Endothelial cell of umbilical vein (primary cell): ENCODE measurements at regions of chr11 and their contacts with region 1.

Region 1: DNA sequence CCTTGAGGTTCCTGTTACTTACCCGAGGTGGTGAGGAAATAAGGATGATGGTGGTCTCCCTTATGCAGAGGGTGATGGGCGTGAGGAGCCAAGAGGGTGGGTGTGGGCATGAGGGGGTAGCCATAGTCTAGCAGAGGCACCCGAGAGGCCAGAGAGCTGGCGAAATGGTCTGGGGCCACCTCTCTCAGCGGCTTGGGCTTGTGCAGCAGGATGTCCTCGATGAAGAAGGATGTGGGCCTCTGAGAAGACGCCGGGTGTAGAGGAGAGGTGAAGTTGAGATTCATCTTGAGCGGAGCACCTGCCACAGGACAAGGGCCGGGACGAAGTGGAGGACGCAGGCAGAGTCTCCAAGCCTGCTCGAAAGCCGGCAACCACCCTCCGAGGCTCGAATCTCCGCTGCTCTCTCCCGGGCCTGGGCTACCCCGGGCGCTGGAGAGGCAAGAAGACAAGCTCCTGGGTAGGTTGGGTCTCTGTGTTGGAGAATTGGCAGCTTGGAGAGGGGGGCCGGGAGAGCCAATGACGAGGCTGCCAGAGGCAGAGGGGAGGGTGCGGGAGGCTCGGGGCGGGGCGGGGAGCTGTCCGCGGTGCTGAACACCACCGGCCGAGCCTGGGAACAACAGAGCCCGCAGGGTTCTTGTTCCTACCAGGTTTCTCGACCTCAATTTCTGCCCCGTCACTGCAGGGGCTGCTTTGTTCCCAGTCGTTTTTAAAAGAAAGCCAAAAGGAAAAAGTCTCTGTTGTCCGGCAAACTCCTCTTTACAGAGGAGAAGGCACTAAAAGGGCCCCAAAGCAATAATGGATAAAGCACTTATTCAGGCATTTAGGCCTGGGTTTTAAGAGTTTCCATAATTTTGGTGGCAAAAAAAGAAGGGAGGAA is at the start of gene BSX:
- DNase-seq: peak; percentile 38
- H3K4me3 ChIP-seq: no peak within 1 kb of the TSS
- H3K27ac ChIP-seq: no peak within 1 kb of the TSS
- H3K4me1 ChIP-seq: no peaks in the 10 kb centered on the region
- H3K27me3 ChIP-seq: peaks cover 77 to 96% of the 10 kb centered on the region in 2 experiments
- CTCF ChIP-seq: no peak
- POLR2A ChIP-seq: no peak
- total RNA-seq, gene BSX: not detected in 2 replicates

Region 2: DNA sequence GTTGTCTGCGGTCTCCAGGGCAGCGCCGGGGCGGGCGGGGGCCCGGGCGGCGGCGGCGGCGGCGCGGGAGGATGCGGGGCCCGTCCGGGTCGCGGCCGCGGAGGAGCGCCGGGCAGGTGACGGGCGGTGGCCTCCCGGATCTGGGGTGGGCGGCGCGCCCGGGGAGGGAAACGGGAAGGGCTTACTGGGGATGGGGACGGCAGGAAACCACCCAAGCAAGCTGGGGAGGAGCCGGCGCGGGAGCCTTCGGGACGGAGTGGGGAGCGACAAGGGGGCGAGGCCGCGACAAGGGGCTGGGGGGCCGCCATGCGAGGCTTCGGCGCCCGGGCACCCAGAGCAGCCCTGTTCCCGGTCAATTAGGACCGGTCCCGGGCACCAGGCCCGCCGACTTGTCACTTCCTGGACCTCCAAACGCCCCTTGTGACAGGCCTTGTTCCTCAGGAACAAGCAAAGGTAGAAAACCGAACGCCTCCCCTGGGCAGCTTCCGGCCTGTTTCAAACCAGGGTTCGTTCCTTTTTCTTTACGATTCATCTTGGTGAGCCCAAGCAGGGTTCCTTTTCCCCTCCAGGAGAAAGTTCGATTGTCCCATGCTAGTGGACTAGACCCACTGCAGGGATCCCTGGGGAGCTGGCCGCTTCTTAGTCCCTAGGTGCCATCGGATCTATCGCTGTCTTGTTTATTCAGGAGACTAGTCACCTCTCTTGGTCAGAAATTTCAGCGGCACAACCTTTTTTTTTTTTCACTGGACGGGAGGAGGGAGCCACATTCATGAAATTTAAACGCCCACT is 98.6 kb before region 1 on chr11:
- CTCF ChIA-PET with region 1: no interaction called
- POLR2A ChIA-PET with region 1: no interaction called
- dilution Hi-C with region 1: no loop called
- intact Hi-C with region 1: loop called (anchors 5 kb)
- DNase-seq: peak; percentile 50
- H3K4me3 ChIP-seq: peak overlapping the region; percentile 58 to 72 (median 71)
- H3K27ac ChIP-seq: peak overlapping the region; percentile 66
- H3K4me1 ChIP-seq: peaks cover 8% of the 10 kb centered on the region
- H3K27me3 ChIP-seq: peaks cover 2 to 4% of the 10 kb centered on the region in 2 experiments
- CTCF ChIP-seq: no peak
- POLR2A ChIP-seq: peak; percentile 53

Region 3: GRCh38 chr11:122910775-122911174 is 70.9 kb before region 1 on chr11:
- CTCF ChIA-PET with region 1: no interaction called
- POLR2A ChIA-PET with region 1: no interaction called
- dilution Hi-C with region 1: no loop called
- intact Hi-C with region 1: no loop called
- DNase-seq: peak; percentile 36
- H3K4me3 ChIP-seq: no peak overlapping the region
- H3K27ac ChIP-seq: no peak overlapping the region
- H3K4me1 ChIP-seq: peaks cover 3% of the 10 kb centered on the region
- H3K27me3 ChIP-seq: no peaks in the 10 kb centered on the region
- CTCF ChIP-seq: peak in 1 of 2 donors; percentile 8
- POLR2A ChIP-seq: no peak

Region 4: DNA sequence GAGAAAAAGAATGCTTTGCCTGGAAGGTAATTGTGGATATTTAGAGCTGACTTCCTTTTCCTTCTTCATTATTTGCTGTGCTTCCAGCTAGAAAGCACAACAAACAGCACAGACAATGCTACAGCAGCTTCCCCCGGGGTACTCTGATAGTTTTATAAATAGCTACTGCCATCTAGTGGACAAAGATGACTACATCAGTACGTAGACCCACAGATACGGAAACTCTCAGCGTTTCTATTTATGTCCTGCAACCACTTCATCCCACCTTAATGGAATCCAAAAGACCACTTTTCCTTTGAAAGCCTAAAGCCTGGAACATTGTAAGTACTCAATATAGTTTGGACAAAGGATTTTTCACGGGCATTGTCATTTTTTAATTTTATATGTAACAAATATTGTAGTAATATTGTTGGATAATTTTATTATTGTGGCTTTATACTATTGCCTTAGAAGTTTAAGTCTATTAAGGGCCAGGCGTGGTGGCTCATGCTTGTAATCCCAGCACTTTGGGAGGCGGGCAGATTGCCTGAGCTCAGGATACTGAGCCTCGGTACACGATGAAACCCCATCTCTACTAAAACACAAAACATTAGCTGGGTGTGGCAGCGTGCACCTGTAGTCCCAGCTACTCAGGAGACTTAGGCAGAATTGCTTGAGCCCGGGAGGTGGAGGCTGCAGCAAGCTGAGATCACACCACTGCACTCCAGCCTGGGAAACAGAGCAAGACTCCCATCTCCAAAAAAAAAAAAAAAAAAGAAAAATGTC is 72.9 kb after region 1 on chr11:
- CTCF ChIA-PET with region 1: interaction called, 3 read pairs
- POLR2A ChIA-PET with region 1: no interaction called
- dilution Hi-C with region 1: no loop called
- intact Hi-C with region 1: loop called (anchors 2 kb)
- DNase-seq: peak; percentile 68
- H3K4me3 ChIP-seq: no peak overlapping the region
- H3K27ac ChIP-seq: no peak overlapping the region
- H3K4me1 ChIP-seq: peaks cover 13% of the 10 kb centered on the region
- H3K27me3 ChIP-seq: no peaks in the 10 kb centered on the region
- CTCF ChIP-seq: peak; percentile 62 to 65
- POLR2A ChIP-seq: peak; percentile 50

Region 5: GRCh38 chr11:123100379-123101085 is 118.9 kb after region 1 on chr11:
- CTCF ChIA-PET with region 1: no interaction called
- POLR2A ChIA-PET with region 1: no interaction called
- dilution Hi-C with region 1: no loop called
- intact Hi-C with region 1: no loop called
- DNase-seq: no peak
- H3K4me3 ChIP-seq: no peak overlapping the region
- H3K27ac ChIP-seq: no peak overlapping the region
- H3K4me1 ChIP-seq: peaks cover 2% of the 10 kb centered on the region
- H3K27me3 ChIP-seq: no peaks in the 10 kb centered on the region
- CTCF ChIP-seq: no peak
- POLR2A ChIP-seq: no peak